HAP-1 (cell line): ENCODE measurements at regions of chr16 and their contacts with region 1.

Region 1: GRCh38 chr16:81729451-81729850 is 49.6 kb upstream of the PLCG2 start:
- DNase-seq: no peak
- H3K4me3 ChIP-seq: no peak overlapping the region
- H3K4me1 ChIP-seq: peaks cover 11% of the 10 kb centered on the region
- H3K27me3 ChIP-seq: no peaks in the 10 kb centered on the region

Region 2: DNA sequence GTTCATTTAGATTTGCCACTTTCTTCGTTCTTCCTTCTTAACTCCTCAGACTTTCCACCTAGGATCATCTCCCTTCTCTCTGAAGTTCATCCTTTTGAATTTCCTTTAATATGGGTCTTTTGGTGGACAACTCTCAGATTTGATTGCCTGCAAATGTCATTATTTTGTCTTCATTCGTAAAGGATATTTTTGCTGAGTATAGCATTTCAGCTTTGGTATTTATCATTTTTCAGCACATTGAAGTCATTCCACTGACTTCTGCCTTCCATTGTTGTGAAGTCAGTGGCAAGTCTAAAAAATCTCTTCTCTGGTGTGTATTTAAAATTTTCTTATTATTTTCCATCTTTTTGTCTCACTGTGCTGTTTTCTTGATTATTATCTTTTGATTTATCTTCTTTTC is 369.3 kb before region 1 on chr16:
- in situ Hi-C with region 1: loop called (anchors 5 kb)
- DNase-seq: no peak
- H3K4me3 ChIP-seq: no peak overlapping the region
- H3K4me1 ChIP-seq: no peaks in the 10 kb centered on the region
- H3K27me3 ChIP-seq: no peaks in the 10 kb centered on the region

Region 3: GRCh38 chr16:81403616-81404373 is 325.7 kb before region 1 on chr16:
- in situ Hi-C with region 1: loop called (anchors 5 kb)
- DNase-seq: peak; percentile 75 to 94
- H3K4me3 ChIP-seq: peak overlapping the region; percentile 18
- H3K4me1 ChIP-seq: peaks cover 6% of the 10 kb centered on the region; the same call in 1 of the 2 replicates
- H3K27me3 ChIP-seq: no peaks in the 10 kb centered on the region